ENCODE measurements at regions of chr17 and their contacts with region 1.

Region 1: DNA sequence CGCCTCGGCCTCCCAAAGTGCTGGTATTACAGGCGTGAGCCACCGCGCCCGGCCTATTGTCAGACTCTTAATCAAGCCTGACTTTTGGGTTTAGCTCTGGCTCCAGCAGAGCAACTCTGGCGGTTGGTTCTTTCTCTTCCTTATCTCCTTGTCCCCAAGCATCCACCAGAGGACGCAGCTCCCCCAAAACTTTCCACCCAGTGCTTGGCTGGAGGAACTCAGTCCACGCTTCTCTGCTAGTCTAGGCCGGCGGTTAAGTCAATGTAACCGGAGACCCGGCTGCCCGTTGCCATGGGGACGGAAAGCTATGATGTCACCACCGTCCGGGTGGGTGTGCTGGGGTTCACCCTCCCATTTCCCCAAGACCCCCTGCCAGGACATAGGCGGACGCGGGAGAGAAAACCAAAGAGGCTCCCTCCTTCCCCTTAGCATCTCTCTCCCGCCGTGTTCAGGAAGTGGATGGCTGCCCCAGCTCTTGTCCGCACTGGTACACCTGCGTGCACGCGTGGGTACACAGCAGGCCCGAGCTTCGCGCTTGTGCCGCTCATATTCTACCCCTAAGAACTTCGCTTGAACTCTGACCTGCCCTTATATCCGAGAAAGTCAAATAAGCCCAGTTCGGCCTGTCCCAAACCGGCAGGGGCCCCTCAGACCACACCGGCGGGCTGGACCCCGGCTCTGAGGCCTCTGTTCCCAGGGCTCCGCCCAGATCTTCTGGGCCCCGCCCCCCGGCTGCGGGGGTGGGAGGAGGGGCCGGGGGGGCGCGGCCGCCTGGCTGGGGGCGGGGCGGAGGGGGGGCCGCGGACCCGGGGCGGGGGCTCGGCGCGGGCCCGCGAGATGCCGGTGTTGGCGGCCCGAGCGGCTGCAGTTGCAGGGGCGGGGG is at the start of gene RND2:
- DNase-seq: peak; percentile 86 to 90 (median 88)
- ATAC-seq: peak; percentile 63 to 79 (median 72)
- H3K4me3 ChIP-seq: peak within 1 kb of the TSS in 11 of 12 donors; percentile 36 to 80 (median 62)
- H3K27ac ChIP-seq: peak within 1 kb of the TSS in 10 of 12 donors; percentile 13 to 83 (median 60)
- H3K4me1 ChIP-seq: peaks cover 0 to 36% (median 22%) of the 10 kb centered on the region in 12 donors
- H3K27me3 ChIP-seq: no peaks in the 10 kb centered on the region
- CTCF ChIP-seq: peak; percentile 44 to 85 (median 70)
- POLR2A ChIP-seq: peak in 1 of 2 donors; percentile 36
- total RNA-seq, gene RND2: 0.29 to 1.6 (median 0.56) TPM

Region 2: DNA sequence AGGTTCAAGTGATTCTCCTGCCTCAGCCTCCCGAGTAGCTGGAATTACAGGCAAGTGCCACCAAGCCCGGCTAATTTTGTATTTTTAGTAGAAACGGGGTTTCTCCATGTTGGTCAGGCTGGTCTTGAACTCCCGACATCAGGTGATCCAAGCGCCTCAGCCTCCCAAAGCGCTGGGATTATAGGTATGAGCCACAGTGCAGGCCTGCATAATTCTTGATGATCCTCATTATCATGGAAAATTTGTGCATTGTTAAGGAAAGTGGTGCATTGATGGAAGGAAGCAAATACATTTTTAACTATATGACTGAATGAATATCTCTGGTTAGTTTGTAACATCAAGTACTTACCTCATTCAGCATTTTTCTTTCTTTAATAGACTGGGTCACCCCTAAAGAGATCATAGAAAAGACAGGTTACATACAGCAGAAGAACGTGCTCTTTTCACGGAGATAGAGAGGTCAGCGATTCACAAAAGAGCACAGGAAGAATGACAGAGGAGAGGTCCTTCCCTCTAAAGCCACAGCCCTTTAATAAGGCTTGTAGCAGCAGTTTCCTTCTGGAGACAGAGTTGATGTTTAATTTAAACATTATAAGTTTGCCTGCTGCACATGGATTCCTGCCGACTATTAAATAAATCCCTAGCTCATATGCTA is 38.5 kb after region 1 on chr17:
- intact Hi-C with region 1: no loop called
- DNase-seq: no peak
- ATAC-seq: no peak
- H3K4me3 ChIP-seq: no peak overlapping the region
- H3K27ac ChIP-seq: no peak overlapping the region
- H3K4me1 ChIP-seq: peaks cover 0 to 2% (median 0%) of the 10 kb centered on the region in 12 donors
- H3K27me3 ChIP-seq: no peaks in the 10 kb centered on the region
- CTCF ChIP-seq: no peak
- POLR2A ChIP-seq: no peak

Region 3: DNA sequence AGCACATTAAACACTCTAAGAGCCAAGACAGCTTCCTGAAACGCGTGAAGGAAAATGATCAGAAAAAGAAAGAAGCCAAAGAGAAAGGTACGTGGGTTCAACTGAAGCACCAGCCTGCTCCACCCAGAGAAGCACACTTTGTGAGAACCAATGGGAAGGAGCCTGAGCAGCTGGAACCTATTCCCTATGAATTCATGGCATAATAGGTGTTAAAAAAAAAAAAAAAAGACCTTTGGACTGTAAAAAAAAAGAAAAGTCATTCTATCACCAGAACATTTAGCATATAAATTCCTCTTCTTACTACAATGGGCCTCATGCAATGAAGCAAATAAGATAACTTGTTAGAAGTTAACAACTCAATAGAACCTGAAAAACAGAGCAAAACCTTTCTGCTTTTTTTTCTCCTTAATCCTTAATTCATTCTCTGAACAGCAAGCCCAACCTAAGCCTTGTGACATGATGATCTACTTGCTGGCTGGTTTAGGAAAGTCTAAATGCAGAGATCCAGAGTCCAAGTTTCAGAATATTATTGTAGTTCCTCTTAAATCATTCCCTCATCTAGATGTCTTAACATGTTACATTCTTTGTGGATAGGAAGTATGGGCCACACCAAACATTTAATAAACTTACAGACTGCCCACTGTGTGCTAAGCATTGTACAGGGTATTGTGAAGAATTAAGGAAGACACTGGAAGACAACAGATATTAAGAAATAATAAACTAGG is 55.1 kb after region 1 on chr17:
- intact Hi-C with region 1: loop called in 1 of 10 experiments (anchors 5 kb)
- DNase-seq: no peak
- ATAC-seq: no peak
- H3K4me3 ChIP-seq: no peak overlapping the region
- H3K27ac ChIP-seq: no peak overlapping the region
- H3K4me1 ChIP-seq: peaks cover 0 to 9% (median 0%) of the 10 kb centered on the region in 12 donors
- H3K27me3 ChIP-seq: no peaks in the 10 kb centered on the region
- CTCF ChIP-seq: no peak
- POLR2A ChIP-seq: no peak

Region 4: GRCh38 chr17:43170766-43171585 is 146.3 kb after region 1 on chr17 and contains the start of gene NBR1:
- intact Hi-C with region 1: loop called in 8 of 10 experiments (anchors 2 to 10 kb)
- DNase-seq: peak; percentile 93 to 95 (median 95)
- ATAC-seq: peak; percentile 92 to 94 (median 94)
- H3K4me3 ChIP-seq: peak within 1 kb of the TSS; percentile 58 to 86 (median 78)
- H3K27ac ChIP-seq: peak within 1 kb of the TSS; percentile 90 to 99 (median 96)
- H3K4me1 ChIP-seq: peaks cover 2 to 60% (median 48%) of the 10 kb centered on the region in 12 donors
- H3K27me3 ChIP-seq: no peaks in the 10 kb centered on the region
- CTCF ChIP-seq: peak in 6 of 12 donors; percentile 11 to 47 (median 35)
- POLR2A ChIP-seq: peak; percentile 4 to 82
- total RNA-seq, gene NBR1: 82.6 to 146 (median 105) TPM

Region 5: GRCh38 chr17:43316522-43317142 is 292.0 kb after region 1 on chr17:
- intact Hi-C with region 1: loop called in 2 of 10 experiments (anchors 5 to 10 kb)
- DNase-seq: no peak
- ATAC-seq: no peak
- H3K4me3 ChIP-seq: no peak overlapping the region
- H3K27ac ChIP-seq: peak overlapping the region in 1 of 12 donors; percentile 15
- H3K4me1 ChIP-seq: peaks cover 0 to 4% (median 0%) of the 10 kb centered on the region in 12 donors
- H3K27me3 ChIP-seq: no peaks in the 10 kb centered on the region
- CTCF ChIP-seq: no peak
- POLR2A ChIP-seq: no peak

Region 6: GRCh38 chr17:43338886-43339516 is 314.4 kb after region 1 on chr17:
- intact Hi-C with region 1: loop called in 4 of 10 experiments (anchors 5 to 10 kb)
- DNase-seq: peak; percentile 61 to 85 (median 75)
- ATAC-seq: no peak
- H3K4me3 ChIP-seq: no peak overlapping the region
- H3K27ac ChIP-seq: no peak overlapping the region
- H3K4me1 ChIP-seq: peaks cover 0 to 42% (median 15%) of the 10 kb centered on the region in 12 donors
- H3K27me3 ChIP-seq: no peaks in the 10 kb centered on the region
- CTCF ChIP-seq: peak; percentile 57 to 81 (median 70)
- POLR2A ChIP-seq: no peak

Measured in heart left ventricle (tissue), 16 donors.